ENCODE measurements at regions of chr2 and their contacts with region 1.

Region 1: DNA sequence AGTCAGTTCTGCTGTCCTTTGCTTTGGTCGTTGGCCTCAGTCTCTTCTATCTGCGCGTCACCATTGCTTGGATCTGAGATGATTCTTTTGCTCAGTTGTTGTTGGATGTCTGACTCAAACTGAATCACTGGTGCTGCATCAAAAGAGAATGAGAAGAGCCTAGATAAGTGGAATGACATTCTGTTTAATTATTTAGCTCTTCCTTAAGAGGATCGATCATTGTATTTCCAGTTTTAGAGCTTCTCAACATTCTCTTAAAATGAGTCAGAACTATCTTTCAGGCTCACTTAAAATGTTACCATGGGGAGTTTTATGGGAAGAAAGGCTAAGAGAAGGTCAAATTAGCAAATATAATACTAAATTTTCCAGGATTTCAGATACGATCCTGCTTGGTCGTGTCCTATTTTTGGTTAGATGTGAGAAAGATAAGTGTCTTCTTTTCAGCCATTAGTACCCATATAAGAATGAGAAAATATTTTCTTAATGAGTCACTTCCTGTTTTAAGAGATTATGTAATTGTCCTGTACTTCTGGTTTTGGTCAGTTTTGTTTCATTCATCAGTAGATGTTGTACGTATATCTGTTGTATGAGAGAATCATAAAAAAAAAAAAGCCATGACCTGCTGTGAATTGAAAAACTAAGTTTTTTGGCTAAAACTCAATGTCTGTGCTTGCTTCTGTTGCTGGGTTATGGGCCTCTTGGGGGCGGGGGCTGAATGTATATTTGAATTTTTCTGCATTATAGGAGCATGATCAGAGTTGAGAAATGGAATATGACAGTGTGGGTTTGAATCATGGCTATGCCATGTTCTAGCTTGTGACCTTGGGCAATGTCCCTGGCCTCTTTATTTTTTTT is 31.6 kb upstream of the CASP10 start:
- DNase-seq: no peak
- H3K4me3 ChIP-seq: no peak overlapping the region
- H3K27ac ChIP-seq: peak overlapping the region; percentile 67 to 71
- H3K4me1 ChIP-seq: peaks cover 4 to 16% of the 10 kb centered on the region in 2 donors
- H3K27me3 ChIP-seq: no peaks in the 10 kb centered on the region
- CTCF ChIP-seq: no peak

Region 2: DNA sequence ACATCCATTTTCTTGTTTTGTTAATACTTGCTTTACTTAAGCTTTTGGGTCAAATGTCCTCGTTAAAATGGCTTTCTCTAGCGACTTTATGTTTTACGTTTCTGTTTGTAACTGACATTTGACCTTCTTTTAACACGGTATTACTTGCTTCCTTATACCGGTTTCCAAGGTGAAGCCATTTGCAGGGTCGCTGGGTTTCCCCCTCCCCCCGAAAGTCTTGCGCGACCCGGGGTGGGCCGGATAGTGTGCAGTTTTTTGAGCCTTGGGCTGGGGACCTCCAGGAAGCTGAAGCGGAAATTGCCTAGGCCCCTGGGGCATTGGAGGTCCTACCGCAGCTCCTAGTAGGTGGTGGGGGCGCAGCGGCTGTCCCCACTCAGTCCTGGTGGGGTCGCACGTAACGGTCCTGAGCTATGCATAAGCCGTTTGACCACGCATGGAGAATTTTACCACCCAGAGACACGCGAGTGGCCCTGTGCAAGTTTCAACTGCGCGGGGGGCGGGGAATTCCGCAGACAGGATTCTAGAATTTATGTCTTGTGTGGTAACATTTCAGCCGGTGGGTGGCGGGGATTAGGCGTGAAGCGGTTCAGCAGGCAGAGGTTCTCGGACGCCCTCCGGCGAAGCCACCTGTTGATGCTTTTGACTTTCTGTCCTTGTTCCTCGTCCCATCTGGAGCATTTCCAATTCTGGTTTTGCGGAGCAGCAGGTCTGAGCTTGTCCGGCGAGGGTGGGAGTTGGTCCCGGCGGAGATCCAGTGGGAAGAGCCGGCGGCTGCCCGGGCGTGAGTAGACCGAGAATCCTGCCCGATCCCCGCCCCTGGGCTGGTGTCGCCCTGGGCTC is 33.0 kb before region 1 on chr2:
- intact Hi-C with region 1: loop called (anchors 5 kb)
- DNase-seq: peak; percentile 55 to 91
- H3K4me3 ChIP-seq: peak overlapping the region; percentile 77 to 85
- H3K27ac ChIP-seq: peak overlapping the region; percentile 99
- H3K4me1 ChIP-seq: peaks cover 3 to 16% of the 10 kb centered on the region in 2 donors
- H3K27me3 ChIP-seq: no peaks in the 10 kb centered on the region
- CTCF ChIP-seq: peak in 2 of 3 experiments; percentile 3 to 53

Region 3: DNA sequence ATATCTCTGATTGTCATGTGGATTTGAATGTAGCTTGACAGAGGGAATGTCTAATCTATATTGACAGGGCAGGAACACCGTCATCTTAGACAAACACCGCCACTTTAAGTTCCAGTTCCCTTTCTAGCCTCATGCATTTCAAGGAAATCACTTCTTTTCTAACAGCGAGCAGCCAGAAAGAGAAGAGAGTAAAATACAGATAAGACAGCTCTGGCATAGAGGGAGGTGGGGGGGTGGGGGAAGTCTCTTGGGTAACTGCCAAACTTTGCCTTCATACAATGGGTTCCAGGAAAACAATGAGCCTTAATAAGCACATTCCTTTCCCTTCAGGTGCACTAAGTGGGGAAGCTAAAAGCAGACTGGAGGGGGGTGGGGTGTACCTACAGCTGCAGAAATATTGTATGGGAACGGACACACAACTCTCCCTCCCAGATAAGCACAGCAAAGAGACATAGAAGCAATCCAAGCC is 68.8 kb after region 1 on chr2:
- intact Hi-C with region 1: no loop called
- DNase-seq: no peak
- H3K4me3 ChIP-seq: no peak overlapping the region
- H3K27ac ChIP-seq: no peak overlapping the region
- H3K4me1 ChIP-seq: no peaks in the 10 kb centered on the region
- H3K27me3 ChIP-seq: no peaks in the 10 kb centered on the region
- CTCF ChIP-seq: no peak